Sigmoid colon (tissue), 7 donors: ENCODE measurements at regions of chr1 and their contacts with region 1.

Region 1: GRCh38 chr1:41268154-41268770 is 26.2 kb upstream of the SCMH1 start:
- DNase-seq: peak; percentile 88
- H3K4me3 ChIP-seq: no peak overlapping the region
- H3K27ac ChIP-seq: no peak overlapping the region
- H3K4me1 ChIP-seq: peaks cover 0 to 9% (median 5%) of the 10 kb centered on the region in 4 donors
- H3K27me3 ChIP-seq: no peaks in the 10 kb centered on the region
- CTCF ChIP-seq: peak; percentile 95 to 98 (median 96)
- EP300 ChIP-seq: no peak
- POLR2A ChIP-seq: no peak

Region 2: GRCh38 chr1:41360993-41361753 is 92.9 kb after region 1 on chr1 and contains the start of gene FOXO6:
- intact Hi-C with region 1: loop called (anchors 5 kb)
- DNase-seq: peak; percentile 99
- H3K4me3 ChIP-seq: peak within 1 kb of the TSS; percentile 22 to 76 (median 60)
- H3K27ac ChIP-seq: peak within 1 kb of the TSS; percentile 64 to 71 (median 68)
- H3K4me1 ChIP-seq: peaks cover 0 to 62% (median 57%) of the 10 kb centered on the region in 4 donors
- H3K27me3 ChIP-seq: peaks cover 0 to under 1% (median 0%) of the 10 kb centered on the region in 3 donors
- CTCF ChIP-seq: peak in 2 of 4 experiments; percentile 22 to 40
- EP300 ChIP-seq: no peak
- POLR2A ChIP-seq: no peak
- total RNA-seq, gene FOXO6: 0.49 to 1.4 (median 0.94) TPM

Region 3: DNA sequence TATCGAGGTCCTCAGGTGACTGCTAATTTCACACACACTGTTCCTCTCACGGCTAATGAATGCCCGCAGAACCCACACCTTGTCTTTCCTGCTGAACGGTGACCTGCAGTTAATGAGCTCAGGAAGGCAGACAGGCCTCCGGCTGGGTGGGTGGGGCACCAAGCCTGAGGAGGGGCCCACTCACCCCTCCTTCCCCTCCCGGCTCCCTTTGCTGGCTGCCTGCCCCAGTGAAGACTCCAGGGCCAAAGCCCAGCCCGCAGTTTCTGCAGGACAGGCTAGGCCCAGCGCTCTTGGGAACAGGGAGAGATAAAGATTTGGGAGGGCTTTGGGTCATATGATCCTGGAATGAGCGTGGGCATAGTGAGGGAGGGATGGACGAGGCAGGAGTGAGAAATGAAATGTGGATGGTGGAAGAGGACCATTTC is 119.4 kb after region 1 on chr1:
- intact Hi-C with region 1: no loop called
- DNase-seq: peak; percentile 92
- H3K4me3 ChIP-seq: no peak overlapping the region
- H3K27ac ChIP-seq: peak overlapping the region; percentile 43 to 63 (median 52)
- H3K4me1 ChIP-seq: peaks cover 0 to 46% (median 45%) of the 10 kb centered on the region in 4 donors
- H3K27me3 ChIP-seq: no peaks in the 10 kb centered on the region
- CTCF ChIP-seq: no peak
- EP300 ChIP-seq: no peak
- POLR2A ChIP-seq: no peak

Region 4: GRCh38 chr1:41416552-41417334 is 148.5 kb after region 1 on chr1:
- intact Hi-C with region 1: loop called (anchors 1 kb)
- DNase-seq: peak; percentile 79
- H3K4me3 ChIP-seq: no peak overlapping the region
- H3K27ac ChIP-seq: no peak overlapping the region
- H3K4me1 ChIP-seq: peaks cover 0 to 22% (median 10%) of the 10 kb centered on the region in 4 donors
- H3K27me3 ChIP-seq: no peaks in the 10 kb centered on the region
- CTCF ChIP-seq: peak; percentile 90 to 94 (median 92)
- EP300 ChIP-seq: no peak
- POLR2A ChIP-seq: no peak

Region 5: DNA sequence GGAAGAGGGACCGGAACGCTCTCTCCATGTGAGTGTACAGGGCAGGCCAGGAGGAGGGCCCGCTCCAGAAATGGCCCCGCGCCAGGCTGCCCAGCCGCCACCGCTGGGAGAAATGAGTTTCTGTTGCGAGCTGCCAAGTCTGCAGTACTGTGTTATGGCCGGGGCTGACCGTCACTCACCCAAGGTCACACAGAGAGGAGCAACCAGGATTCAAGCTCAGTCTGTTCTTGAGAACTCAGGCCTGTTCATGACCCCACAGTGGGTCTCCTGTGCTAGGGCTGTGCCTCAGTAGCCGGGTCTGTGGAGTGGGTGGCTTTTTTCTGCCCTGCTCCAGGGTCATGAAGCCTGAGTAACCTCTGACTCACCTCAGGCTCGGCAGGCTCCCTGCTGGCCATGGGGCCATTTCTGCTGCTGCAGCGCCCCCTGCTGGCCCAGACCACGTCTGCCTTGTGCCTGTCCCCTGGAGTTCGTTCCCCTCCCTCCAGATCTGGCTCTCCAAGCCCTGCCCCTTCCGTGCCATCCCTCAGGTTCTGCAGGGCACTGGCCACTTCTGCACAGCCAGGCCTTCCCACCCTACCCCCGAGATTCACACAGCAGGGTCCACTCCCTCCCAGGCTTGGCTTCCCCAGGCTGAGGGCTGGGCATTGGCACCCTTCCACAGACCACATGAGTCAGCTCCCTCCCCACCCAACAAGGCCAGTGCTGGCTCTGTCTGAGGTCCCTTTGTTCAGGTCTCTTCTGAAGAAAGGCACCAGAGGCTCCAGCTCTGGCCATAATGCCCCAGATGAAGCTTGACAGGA is 164.4 kb after region 1 on chr1:
- intact Hi-C with region 1: loop called (anchors 5 kb)
- DNase-seq: peak; percentile 91
- H3K4me3 ChIP-seq: no peak overlapping the region
- H3K27ac ChIP-seq: peak overlapping the region; percentile 53 to 74 (median 62)
- H3K4me1 ChIP-seq: peaks cover 0 to 38% (median 34%) of the 10 kb centered on the region in 4 donors
- H3K27me3 ChIP-seq: peaks cover 0 to 10% (median 0%) of the 10 kb centered on the region in 3 donors
- CTCF ChIP-seq: peak; percentile 67 to 87 (median 76)
- EP300 ChIP-seq: no peak
- POLR2A ChIP-seq: no peak

Region 6: GRCh38 chr1:41516168-41517061 is 248.2 kb after region 1 on chr1:
- intact Hi-C with region 1: loop called (anchors 1 kb)
- DNase-seq: peak; percentile 94
- H3K4me3 ChIP-seq: peak overlapping the region; percentile 31 to 54 (median 48)
- H3K27ac ChIP-seq: peak overlapping the region in 2 of 4 donors; percentile 51 to 61
- H3K4me1 ChIP-seq: peaks cover 0 to 20% (median 17%) of the 10 kb centered on the region in 4 donors
- H3K27me3 ChIP-seq: no peaks in the 10 kb centered on the region
- CTCF ChIP-seq: peak; percentile 63 to 94 (median 80)
- EP300 ChIP-seq: no peak
- POLR2A ChIP-seq: no peak